GM12878 (cell line): ENCODE measurements at regions of chr13 and their contacts with region 1.

Region 1: DNA sequence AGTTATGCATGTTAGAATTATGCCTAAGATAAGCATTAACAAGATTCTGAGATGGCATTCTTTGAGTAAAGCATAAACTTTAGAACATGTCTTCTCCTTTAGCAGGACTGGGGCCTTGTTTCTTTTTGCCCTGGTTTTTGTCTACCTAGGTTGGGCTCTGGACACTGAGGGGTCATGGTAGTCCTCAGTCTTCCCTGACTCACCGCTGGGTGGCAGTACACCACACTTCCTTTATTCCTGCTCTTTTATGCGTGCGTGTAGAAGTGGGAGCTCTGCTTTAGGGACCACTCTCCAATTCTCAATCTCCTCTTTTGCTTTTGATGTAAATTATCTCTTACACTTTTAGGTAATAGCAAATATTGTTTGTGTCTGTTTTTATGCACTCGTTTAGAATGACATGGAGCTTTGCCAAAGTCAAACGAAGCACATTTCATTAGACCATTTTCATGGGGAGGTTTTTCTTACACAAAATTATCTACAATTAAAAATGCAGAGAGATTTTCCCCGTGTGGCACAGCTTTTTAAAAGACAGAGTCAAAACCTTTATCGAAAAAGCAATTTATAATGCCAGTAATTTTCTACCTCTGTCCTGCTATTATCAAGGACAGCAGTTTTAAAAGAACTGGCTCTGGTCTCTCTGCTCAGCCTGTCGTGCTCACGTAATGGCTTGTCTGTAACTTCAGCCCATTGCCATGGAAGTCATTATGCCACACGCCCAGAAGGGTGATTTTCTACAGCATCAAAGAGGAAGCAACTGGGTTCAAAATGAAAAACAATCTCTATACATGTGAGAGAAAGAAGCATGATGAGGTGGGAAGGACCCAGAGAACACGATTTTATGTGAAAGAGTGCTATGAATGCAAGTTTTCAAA is 413.9 kb downstream of the COG6 start:
- DNase-seq: no peak
- ATAC-seq: peak; percentile 92
- H3K4me3 ChIP-seq: no peak overlapping the region
- H3K27ac ChIP-seq: no peak overlapping the region
- H3K4me1 ChIP-seq: no peaks in the 10 kb centered on the region
- H3K27me3 ChIP-seq: peaks cover 0 to 8% of the 10 kb centered on the region in 2 experiments; a peak in 1 of 4 replicates
- CTCF ChIP-seq: peak; percentile 76 to 81 (median 79)
- EP300 ChIP-seq: no peak
- POLR2A ChIP-seq: no peak
- RAD21 ChIP-seq: peak; percentile 82

Region 2: DNA sequence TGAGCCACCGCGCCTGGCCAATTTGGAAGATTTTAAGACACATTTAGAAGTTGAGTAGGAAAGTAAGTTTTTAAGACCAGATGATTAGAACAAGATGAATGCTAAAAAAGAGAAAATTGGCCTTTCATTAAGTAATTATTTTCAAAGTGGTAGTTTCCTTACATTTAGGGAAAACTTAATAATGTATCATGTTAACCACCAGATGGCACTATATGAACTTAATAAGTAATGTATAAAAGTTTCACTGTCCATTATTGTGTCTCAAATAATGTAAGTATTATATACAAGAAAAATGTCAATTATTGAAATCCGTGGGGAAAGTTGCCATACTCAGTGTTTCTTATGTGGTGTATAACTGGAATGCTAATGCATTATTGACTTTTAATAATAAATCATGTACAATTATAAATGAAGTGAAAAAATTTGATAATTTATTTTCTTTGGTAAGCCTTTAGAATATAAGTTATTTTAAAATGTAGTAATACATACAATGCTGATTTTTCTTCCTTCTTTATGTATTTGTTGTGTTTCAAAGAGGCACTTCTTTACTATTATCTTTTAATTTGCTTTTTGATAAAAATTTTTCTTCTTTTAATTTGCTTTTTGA is 384.8 kb before region 1 on chr13:
- CTCF ChIA-PET with region 1: interaction called, 7 read pairs
- POLR2A ChIA-PET with region 1: no interaction called
- RAD21 ChIA-PET with region 1: interaction called, 4 read pairs
- SMC1A ChIA-PET with region 1: interaction called, 3 read pairs
- in situ Hi-C with region 1: no loop called
- intact Hi-C with region 1: loop called (anchors 10 kb)
- DNase-seq: no peak
- ATAC-seq: peak; percentile 60
- H3K4me3 ChIP-seq: no peak overlapping the region
- H3K27ac ChIP-seq: no peak overlapping the region
- H3K4me1 ChIP-seq: peaks cover 6% of the 10 kb centered on the region; the same call in 1 of the 2 replicates
- H3K27me3 ChIP-seq: no peaks in the 10 kb centered on the region
- CTCF ChIP-seq: peak in 1 of 3 experiments; percentile 18; a peak in 2 of 6 replicates
- EP300 ChIP-seq: no peak
- POLR2A ChIP-seq: no peak
- RAD21 ChIP-seq: peak; percentile 22; the same call in 1 of the 2 replicates

Region 3: DNA sequence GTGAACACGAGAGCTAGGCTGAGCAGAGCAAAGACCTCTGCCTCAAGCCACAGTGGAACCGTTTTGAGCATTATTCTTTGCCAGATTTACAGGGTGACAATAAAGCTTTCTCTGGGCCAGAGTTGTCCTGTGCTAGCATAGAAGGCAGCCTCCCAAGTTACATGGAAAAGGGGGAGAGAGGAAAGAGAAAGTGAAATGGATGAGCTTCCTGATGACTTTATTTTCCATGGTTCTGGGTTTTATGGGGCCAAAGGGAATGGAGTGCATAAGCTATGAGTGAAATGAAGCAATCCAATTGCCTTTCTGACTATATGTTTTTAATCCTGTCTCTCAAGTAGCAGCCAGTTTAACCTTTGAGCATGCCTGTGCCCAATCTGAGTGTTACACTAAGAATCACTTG is 14.4 kb after region 1 on chr13:
- CTCF ChIA-PET with region 1: interaction called, 28 read pairs
- POLR2A ChIA-PET with region 1: no interaction called
- RAD21 ChIA-PET with region 1: interaction called, 3 read pairs
- SMC1A ChIA-PET with region 1: interaction called, 4 read pairs
- in situ Hi-C with region 1: no loop called
- intact Hi-C with region 1: no loop called
- DNase-seq: no peak
- ATAC-seq: no peak
- H3K4me3 ChIP-seq: no peak overlapping the region
- H3K27ac ChIP-seq: no peak overlapping the region
- H3K4me1 ChIP-seq: no peaks in the 10 kb centered on the region
- H3K27me3 ChIP-seq: no peaks in the 10 kb centered on the region; a peak in 3 of 4 replicates
- CTCF ChIP-seq: no peak
- EP300 ChIP-seq: no peak
- POLR2A ChIP-seq: no peak
- RAD21 ChIP-seq: no peak

Region 4: GRCh38 chr13:40445557-40445990 is 376.2 kb after region 1 on chr13:
- CTCF ChIA-PET with region 1: no interaction called
- POLR2A ChIA-PET with region 1: no interaction called
- RAD21 ChIA-PET with region 1: no interaction called
- SMC1A ChIA-PET with region 1: interaction called, 3 read pairs
- in situ Hi-C with region 1: no loop called
- intact Hi-C with region 1: loop called (anchors 10 kb)
- DNase-seq: peak; percentile 99
- ATAC-seq: peak; percentile 99
- H3K4me3 ChIP-seq: no peak overlapping the region
- H3K27ac ChIP-seq: peak overlapping the region; percentile 42
- H3K4me1 ChIP-seq: peaks cover 13% of the 10 kb centered on the region
- H3K27me3 ChIP-seq: no peaks in the 10 kb centered on the region
- CTCF ChIP-seq: no peak
- EP300 ChIP-seq: peak; percentile 100
- POLR2A ChIP-seq: no peak
- RAD21 ChIP-seq: peak; percentile 35; the same call in 1 of the 2 replicates

Region 5: GRCh38 chr13:40682449-40683240 is 613.2 kb after region 1 on chr13:
- CTCF ChIA-PET with region 1: interaction called, 115 read pairs
- POLR2A ChIA-PET with region 1: interaction called, 4 read pairs
- RAD21 ChIA-PET with region 1: interaction called, 92 read pairs
- SMC1A ChIA-PET with region 1: interaction called, 55 read pairs
- in situ Hi-C with region 1: loop called (anchors 5 kb)
- intact Hi-C with region 1: loop called (anchors 1 kb)
- DNase-seq: no peak
- ATAC-seq: peak; percentile 65
- H3K4me3 ChIP-seq: no peak overlapping the region
- H3K27ac ChIP-seq: no peak overlapping the region
- H3K4me1 ChIP-seq: no peaks in the 10 kb centered on the region
- H3K27me3 ChIP-seq: peaks cover 0 to 3% of the 10 kb centered on the region in 2 experiments; a peak in 1 of 4 replicates
- CTCF ChIP-seq: peak in 1 of 3 experiments; percentile 48; a peak in 4 of 6 replicates
- EP300 ChIP-seq: no peak; a peak in 1 of 4 replicates
- POLR2A ChIP-seq: no peak
- RAD21 ChIP-seq: peak; percentile 55